Activated CD4-positive, alpha-beta T cell treated with anti-CD3 and anti-CD28 coated beads for 36 hours (primary cell): ENCODE measurements at regions of chr6 and their contacts with region 1.

Region 1: DNA sequence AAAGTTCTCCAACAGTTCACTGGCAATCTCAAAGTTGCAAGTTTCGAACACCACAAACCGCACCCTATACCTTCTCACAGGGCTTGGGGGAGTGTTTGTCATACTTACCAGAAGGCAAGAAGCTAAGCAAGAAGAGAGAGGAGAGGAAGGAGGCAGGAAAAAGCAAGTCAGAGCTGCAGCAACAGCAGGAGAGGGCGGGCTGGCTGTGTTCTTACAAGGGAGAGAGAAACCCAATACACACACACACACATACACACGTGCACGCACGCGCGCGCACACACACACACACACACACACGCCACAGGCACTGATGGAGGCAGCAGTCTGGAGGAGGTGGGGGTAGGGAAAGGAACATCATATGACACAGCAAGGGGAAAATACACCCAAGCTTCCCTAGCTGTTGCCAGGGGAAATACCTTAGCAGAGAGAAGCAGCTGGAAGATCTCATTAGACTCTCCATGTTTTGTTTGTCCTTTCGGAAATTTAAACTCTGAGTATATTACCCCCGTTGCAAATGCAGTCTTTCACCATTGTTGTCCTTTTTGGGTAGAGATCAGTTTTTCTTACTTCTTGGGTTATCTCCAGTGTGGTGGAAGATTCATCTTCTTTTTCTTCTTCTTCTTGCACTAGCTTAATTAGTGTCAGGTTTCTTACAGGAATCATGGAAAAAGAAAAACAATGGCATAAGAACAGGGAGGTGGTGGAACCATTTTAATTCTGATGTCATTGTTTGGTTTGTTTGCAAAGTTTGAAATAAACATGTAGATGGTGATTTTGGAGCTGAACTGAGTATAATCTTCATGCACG is at the start of gene TXLNB:
- DNase-seq: peak; percentile 92
- ATAC-seq: peak; percentile 94
- H3K4me3 Mint-ChIP-seq: peak within 1 kb of the TSS; percentile 64
- H3K27ac Mint-ChIP-seq: peak within 1 kb of the TSS; percentile 96
- H3K4me1 Mint-ChIP-seq: peaks cover 66% of the 10 kb centered on the region
- H3K27me3 Mint-ChIP-seq: no peaks in the 10 kb centered on the region
- total RNA-seq, gene TXLNB: 0.26 to 0.27 TPM

Region 2: GRCh38 chr6:138692058-138692977 is 599.7 kb before region 1 on chr6:
- CTCF ChIA-PET with region 1: no interaction called
- POLR2A ChIA-PET with region 1: no interaction called
- intact Hi-C with region 1: no loop called
- DNase-seq: peak; percentile 74
- ATAC-seq: peak; percentile 63
- H3K4me3 Mint-ChIP-seq: peak overlapping the region; percentile 68
- H3K27ac Mint-ChIP-seq: no peak overlapping the region
- H3K4me1 Mint-ChIP-seq: peaks cover 10% of the 10 kb centered on the region
- H3K27me3 Mint-ChIP-seq: peaks cover 29% of the 10 kb centered on the region

Region 3: GRCh38 chr6:138817822-138818308 is 474.2 kb before region 1 on chr6:
- CTCF ChIA-PET with region 1: no interaction called
- POLR2A ChIA-PET with region 1: no interaction called
- intact Hi-C with region 1: loop called in 1 of 2 experiments (anchors 2 kb)
- DNase-seq: peak; percentile 43
- ATAC-seq: peak; percentile 75
- H3K4me3 Mint-ChIP-seq: no peak overlapping the region
- H3K27ac Mint-ChIP-seq: peak overlapping the region; percentile 82
- H3K4me1 Mint-ChIP-seq: peaks cover 24% of the 10 kb centered on the region
- H3K27me3 Mint-ChIP-seq: no peaks in the 10 kb centered on the region

Region 4: DNA sequence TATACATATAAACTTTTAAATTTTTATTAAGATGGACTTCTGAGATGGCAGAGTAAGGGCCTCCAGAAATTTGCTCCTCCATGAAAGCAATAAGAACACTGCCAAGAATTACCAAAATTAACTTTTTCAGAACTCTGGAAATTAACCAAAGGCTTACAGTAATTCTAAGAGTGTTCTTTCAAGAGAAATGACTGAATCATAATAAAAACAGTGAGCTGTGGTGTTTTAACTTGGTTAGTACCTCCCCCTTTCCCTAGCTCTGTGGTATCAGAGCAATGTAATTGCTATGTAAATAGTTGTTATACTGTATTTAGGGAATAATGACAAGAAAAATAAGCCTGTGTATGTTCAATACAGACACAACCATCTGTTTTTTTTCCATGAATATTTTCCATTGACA is 138.2 kb before region 1 on chr6:
- CTCF ChIA-PET with region 1: interaction called, 3 read pairs
- POLR2A ChIA-PET with region 1: no interaction called
- intact Hi-C with region 1: loop called (anchors 1 to 2 kb)
- DNase-seq: no peak
- ATAC-seq: peak; percentile 47
- H3K4me3 Mint-ChIP-seq: peak overlapping the region; percentile 30
- H3K27ac Mint-ChIP-seq: peak overlapping the region; percentile 100
- H3K4me1 Mint-ChIP-seq: peaks cover 82% of the 10 kb centered on the region
- H3K27me3 Mint-ChIP-seq: no peaks in the 10 kb centered on the region

Region 5: GRCh38 chr6:139262519-139263300 is 29.3 kb before region 1 on chr6:
- CTCF ChIA-PET with region 1: interaction called, 14 read pairs
- POLR2A ChIA-PET with region 1: interaction called, 20 read pairs
- intact Hi-C with region 1: loop called (anchors 1 kb)
- DNase-seq: peak; percentile 56
- ATAC-seq: peak; percentile 97
- H3K4me3 Mint-ChIP-seq: peak overlapping the region; percentile 65
- H3K27ac Mint-ChIP-seq: peak overlapping the region; percentile 93
- H3K4me1 Mint-ChIP-seq: peaks cover 38% of the 10 kb centered on the region
- H3K27me3 Mint-ChIP-seq: no peaks in the 10 kb centered on the region

Region 6: DNA sequence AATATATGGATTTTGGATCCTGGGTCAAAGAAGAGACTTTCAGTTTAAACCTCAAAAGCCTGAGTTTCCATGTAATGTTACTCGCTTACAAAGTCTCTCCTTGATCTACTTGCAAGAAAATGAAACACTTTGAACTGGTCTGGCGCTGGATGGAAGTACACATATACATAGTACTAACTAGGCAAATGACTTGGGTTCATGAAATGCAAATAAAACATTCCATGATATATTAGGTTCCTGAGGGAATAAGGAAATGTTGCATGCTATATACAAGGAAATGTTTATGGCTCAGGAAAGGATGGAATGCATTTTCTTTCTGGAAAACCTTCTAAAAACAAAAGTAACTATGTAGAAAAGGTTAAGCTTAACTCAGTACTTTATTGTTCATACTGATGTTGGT is 11.2 kb after region 1 on chr6:
- CTCF ChIA-PET with region 1: interaction called, 15 read pairs
- POLR2A ChIA-PET with region 1: interaction called, 3 read pairs
- intact Hi-C with region 1: loop called (anchors 2 kb)
- DNase-seq: no peak
- ATAC-seq: no peak
- H3K4me3 Mint-ChIP-seq: no peak overlapping the region
- H3K27ac Mint-ChIP-seq: no peak overlapping the region
- H3K4me1 Mint-ChIP-seq: peaks cover 8% of the 10 kb centered on the region
- H3K27me3 Mint-ChIP-seq: no peaks in the 10 kb centered on the region

Region 7: GRCh38 chr6:139323511-139324300 is 31.7 kb after region 1 on chr6:
- CTCF ChIA-PET with region 1: interaction called, 6 read pairs
- POLR2A ChIA-PET with region 1: interaction called, 7 read pairs
- intact Hi-C with region 1: loop called (anchors 1 kb)
- DNase-seq: peak; percentile 84
- ATAC-seq: peak; percentile 87
- H3K4me3 Mint-ChIP-seq: peak overlapping the region; percentile 66
- H3K27ac Mint-ChIP-seq: peak overlapping the region; percentile 94
- H3K4me1 Mint-ChIP-seq: peaks cover 32% of the 10 kb centered on the region
- H3K27me3 Mint-ChIP-seq: no peaks in the 10 kb centered on the region